ENCODE measurements at regions of chr1 and their contacts with region 1.

Region 1: DNA sequence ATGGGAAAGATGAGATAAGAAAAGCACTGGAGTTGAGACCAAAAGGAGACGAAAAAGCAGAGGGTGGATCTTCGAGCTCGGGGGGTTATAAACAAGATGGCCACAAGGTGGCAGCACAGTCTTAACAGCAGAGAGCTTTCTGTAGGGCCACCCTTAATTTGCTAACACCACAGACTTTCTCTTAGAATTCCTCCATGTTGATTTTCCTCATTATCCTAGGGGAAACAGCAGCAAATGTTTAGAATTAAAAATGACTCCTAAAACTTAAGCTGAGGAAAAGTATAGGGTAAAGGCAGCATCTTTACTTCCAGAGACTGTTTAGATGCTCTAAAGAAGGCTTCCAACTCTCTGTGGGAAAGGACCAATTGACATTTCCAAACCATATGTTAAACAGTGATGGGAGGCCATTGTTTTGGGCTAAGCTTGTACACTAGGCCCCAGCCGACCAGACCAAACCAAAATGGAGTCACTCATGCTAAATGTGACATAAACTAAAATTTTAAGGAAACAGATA is 2.5 kb upstream of the APOBEC4 start:
- DNase-seq: peak; percentile 61
- ATAC-seq: peak; percentile 66
- H3K4me3 ChIP-seq: no peak overlapping the region
- H3K27ac ChIP-seq: no peak overlapping the region
- H3K4me1 ChIP-seq: peaks cover 31% of the 10 kb centered on the region
- H3K27me3 ChIP-seq: no peaks in the 10 kb centered on the region
- CTCF ChIP-seq: peak; percentile 80 to 88 (median 80); a peak in 5 of 6 replicates
- EP300 ChIP-seq: no peak
- POLR2A ChIP-seq: no peak
- RAD21 ChIP-seq: peak; percentile 92

Region 2: DNA sequence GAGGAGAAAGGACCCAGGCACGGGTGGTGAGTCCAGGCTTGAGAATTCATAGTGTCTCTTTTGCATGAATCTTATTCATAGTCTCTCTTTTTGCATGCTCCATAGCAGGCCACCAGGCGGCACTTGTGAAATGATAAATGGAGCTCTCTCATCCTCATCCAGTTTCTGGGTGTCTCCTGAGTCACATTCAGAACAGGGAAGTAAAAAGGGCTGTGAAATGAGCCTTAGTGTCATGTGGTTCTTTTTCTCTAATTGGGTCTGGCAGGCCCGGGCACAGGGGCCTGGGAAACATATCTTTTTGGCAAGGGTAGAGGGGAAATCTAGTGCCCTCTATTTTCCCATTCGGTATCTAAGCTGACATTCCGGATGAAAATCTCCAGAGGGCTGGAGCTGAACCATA is 46.3 kb before region 1 on chr1:
- CTCF ChIA-PET with region 1: interaction called, 17 read pairs
- POLR2A ChIA-PET with region 1: no interaction called
- RAD21 ChIA-PET with region 1: interaction called, 14 read pairs
- SMC1A ChIA-PET with region 1: interaction called, 18 read pairs
- in situ Hi-C with region 1: no loop called
- intact Hi-C with region 1: no loop called
- DNase-seq: no peak
- ATAC-seq: peak; percentile 62
- H3K4me3 ChIP-seq: no peak overlapping the region
- H3K27ac ChIP-seq: peak overlapping the region; percentile 53
- H3K4me1 ChIP-seq: peaks cover 46% of the 10 kb centered on the region
- H3K27me3 ChIP-seq: no peaks in the 10 kb centered on the region
- CTCF ChIP-seq: peak; percentile 69 to 76 (median 72)
- EP300 ChIP-seq: peak in 1 of 2 experiments; percentile 57; a peak in 1 of 4 replicates
- POLR2A ChIP-seq: no peak
- RAD21 ChIP-seq: peak; percentile 70

Region 3: GRCh38 chr1:183635606-183636333 is 19.8 kb before region 1 on chr1 and contains the start of gene ARPC5:
- CTCF ChIA-PET with region 1: interaction called, 81 read pairs
- POLR2A ChIA-PET with region 1: interaction called, 8 read pairs
- RAD21 ChIA-PET with region 1: interaction called, 56 read pairs
- SMC1A ChIA-PET with region 1: interaction called, 70 read pairs
- in situ Hi-C with region 1: no loop called
- intact Hi-C with region 1: no loop called
- DNase-seq: peak; percentile 95
- ATAC-seq: peak; percentile 86
- H3K4me3 ChIP-seq: peak within 1 kb of the TSS; percentile 93
- H3K27ac ChIP-seq: peak within 1 kb of the TSS; percentile 96
- H3K4me1 ChIP-seq: 0 out of 2 replicates have a peak, but pooled peaks cover 3% of the 10 kb centered on the region
- H3K27me3 ChIP-seq: no peaks in the 10 kb centered on the region
- CTCF ChIP-seq: no peak
- EP300 ChIP-seq: no peak
- POLR2A ChIP-seq: peak; percentile 93
- RAD21 ChIP-seq: no peak
- polyA plus RNA-seq, gene ARPC5: 246 to 274 TPM

Region 4: DNA sequence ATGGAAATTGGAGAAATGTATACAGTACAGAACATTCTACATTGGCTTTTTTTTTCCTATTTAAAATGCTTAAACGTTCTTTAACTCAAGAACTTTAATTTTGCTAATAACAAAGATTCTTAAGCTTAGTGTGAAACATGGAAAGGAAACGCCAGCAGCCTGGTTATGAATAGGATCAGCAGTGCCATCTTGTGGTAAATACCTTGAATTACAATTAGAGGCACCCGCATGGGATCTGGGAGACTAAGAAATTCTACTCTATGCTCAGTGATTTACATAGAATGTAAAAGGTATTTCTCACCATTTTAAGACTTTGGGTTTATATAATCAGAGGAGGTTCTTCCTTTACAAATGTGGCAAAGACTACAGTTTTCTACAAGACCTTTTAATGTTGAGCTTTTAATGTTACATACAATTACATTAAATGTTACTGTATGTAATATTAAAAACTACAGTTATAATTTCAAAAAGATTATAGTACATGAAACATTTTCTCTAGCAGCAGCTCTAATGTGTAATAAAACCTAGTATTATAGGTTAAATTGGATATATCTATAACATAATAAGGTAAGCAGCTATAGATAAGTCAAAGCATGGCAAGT is 29.6 kb after region 1 on chr1:
- CTCF ChIA-PET with region 1: interaction called, 199 read pairs
- POLR2A ChIA-PET with region 1: interaction called, 6 read pairs
- RAD21 ChIA-PET with region 1: interaction called, 101 read pairs
- SMC1A ChIA-PET with region 1: interaction called, 128 read pairs
- in situ Hi-C with region 1: no loop called
- intact Hi-C with region 1: loop called (anchors 1 kb)
- DNase-seq: peak; percentile 11
- ATAC-seq: peak; percentile 75
- H3K4me3 ChIP-seq: no peak overlapping the region
- H3K27ac ChIP-seq: no peak overlapping the region
- H3K4me1 ChIP-seq: 0 out of 2 replicates have a peak, but pooled peaks cover 2% of the 10 kb centered on the region
- H3K27me3 ChIP-seq: no peaks in the 10 kb centered on the region
- CTCF ChIP-seq: peak; percentile 60 to 77 (median 65)
- EP300 ChIP-seq: no peak
- POLR2A ChIP-seq: no peak
- RAD21 ChIP-seq: peak; percentile 81

Region 5: GRCh38 chr1:183891158-183891856 is 235.7 kb after region 1 on chr1:
- CTCF ChIA-PET with region 1: interaction called, 11 read pairs
- POLR2A ChIA-PET with region 1: interaction called, 4 read pairs
- RAD21 ChIA-PET with region 1: interaction called, 3 read pairs
- SMC1A ChIA-PET with region 1: interaction called, 7 read pairs
- in situ Hi-C with region 1: no loop called
- intact Hi-C with region 1: no loop called
- DNase-seq: no peak
- ATAC-seq: peak; percentile 79
- H3K4me3 ChIP-seq: no peak overlapping the region
- H3K27ac ChIP-seq: peak overlapping the region; percentile 56
- H3K4me1 ChIP-seq: peaks cover 71% of the 10 kb centered on the region
- H3K27me3 ChIP-seq: no peaks in the 10 kb centered on the region
- CTCF ChIP-seq: no peak
- EP300 ChIP-seq: no peak
- POLR2A ChIP-seq: no peak
- RAD21 ChIP-seq: no peak

Region 6: DNA sequence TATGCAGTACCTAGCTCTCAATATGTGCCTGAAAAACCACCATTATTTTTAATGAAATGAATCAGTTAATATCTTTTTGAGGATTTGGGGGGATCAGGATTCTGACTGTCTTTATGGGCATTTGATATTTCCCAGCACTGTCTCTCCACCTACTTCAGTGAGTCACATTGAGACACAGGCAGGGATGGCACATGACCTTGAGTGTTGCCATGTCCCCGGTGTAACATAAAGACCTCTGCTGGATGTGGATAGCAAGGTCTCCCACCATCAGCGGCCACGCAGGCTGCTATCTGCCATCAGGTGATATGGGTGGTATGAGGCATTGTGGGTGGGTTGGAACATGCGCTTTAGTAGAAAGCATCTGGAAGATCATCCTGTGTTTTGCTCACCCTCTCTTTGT is 252.5 kb after region 1 on chr1:
- CTCF ChIA-PET with region 1: interaction called, 360 read pairs
- POLR2A ChIA-PET with region 1: interaction called, 5 read pairs
- RAD21 ChIA-PET with region 1: interaction called, 299 read pairs
- SMC1A ChIA-PET with region 1: interaction called, 331 read pairs
- in situ Hi-C with region 1: loop called (anchors 5 kb)
- intact Hi-C with region 1: no loop called
- DNase-seq: no peak
- ATAC-seq: no peak
- H3K4me3 ChIP-seq: no peak overlapping the region
- H3K27ac ChIP-seq: no peak overlapping the region
- H3K4me1 ChIP-seq: peaks cover 38% of the 10 kb centered on the region
- H3K27me3 ChIP-seq: no peaks in the 10 kb centered on the region
- CTCF ChIP-seq: no peak
- EP300 ChIP-seq: no peak
- POLR2A ChIP-seq: peak; percentile 19; the same call in 1 of the 2 replicates
- RAD21 ChIP-seq: no peak

Region 7: DNA sequence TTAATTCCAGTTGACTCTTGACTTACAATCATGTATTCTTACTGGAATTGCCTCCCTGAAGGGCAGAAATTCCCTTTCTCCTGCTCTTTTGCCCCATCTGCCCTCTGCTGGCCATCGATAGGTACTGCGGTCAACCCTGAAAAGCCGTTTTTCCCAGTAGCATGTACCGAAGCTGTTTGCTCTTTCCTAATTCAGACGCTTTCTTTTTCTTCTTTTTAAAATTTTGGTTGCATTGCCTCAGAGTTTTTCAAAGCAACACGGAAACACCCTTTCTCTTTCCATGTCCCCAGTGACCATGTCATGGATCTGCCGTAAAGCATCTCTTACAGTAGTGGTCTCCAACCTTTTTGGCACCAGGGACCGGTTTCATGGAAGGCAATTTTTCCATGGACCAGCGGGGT is 567.0 kb after region 1 on chr1:
- CTCF ChIA-PET with region 1: interaction called, 9 read pairs
- POLR2A ChIA-PET with region 1: no interaction called
- RAD21 ChIA-PET with region 1: interaction called, 4 read pairs
- SMC1A ChIA-PET with region 1: interaction called, 6 read pairs
- in situ Hi-C with region 1: loop called (anchors 10 kb)
- intact Hi-C with region 1: loop called (anchors 1 kb)
- DNase-seq: peak; percentile 11
- ATAC-seq: peak; percentile 59
- H3K4me3 ChIP-seq: no peak overlapping the region
- H3K27ac ChIP-seq: no peak overlapping the region
- H3K4me1 ChIP-seq: no peaks in the 10 kb centered on the region
- H3K27me3 ChIP-seq: peaks cover 0 to 5% of the 10 kb centered on the region in 2 experiments; a peak in 1 of 4 replicates
- CTCF ChIP-seq: peak; percentile 86 to 96 (median 93)
- EP300 ChIP-seq: no peak
- POLR2A ChIP-seq: no peak
- RAD21 ChIP-seq: peak; percentile 90

Measured in GM12878 (cell line).